ENCODE measurements at regions of chr2 and their contacts with region 1.

Region 1: DNA sequence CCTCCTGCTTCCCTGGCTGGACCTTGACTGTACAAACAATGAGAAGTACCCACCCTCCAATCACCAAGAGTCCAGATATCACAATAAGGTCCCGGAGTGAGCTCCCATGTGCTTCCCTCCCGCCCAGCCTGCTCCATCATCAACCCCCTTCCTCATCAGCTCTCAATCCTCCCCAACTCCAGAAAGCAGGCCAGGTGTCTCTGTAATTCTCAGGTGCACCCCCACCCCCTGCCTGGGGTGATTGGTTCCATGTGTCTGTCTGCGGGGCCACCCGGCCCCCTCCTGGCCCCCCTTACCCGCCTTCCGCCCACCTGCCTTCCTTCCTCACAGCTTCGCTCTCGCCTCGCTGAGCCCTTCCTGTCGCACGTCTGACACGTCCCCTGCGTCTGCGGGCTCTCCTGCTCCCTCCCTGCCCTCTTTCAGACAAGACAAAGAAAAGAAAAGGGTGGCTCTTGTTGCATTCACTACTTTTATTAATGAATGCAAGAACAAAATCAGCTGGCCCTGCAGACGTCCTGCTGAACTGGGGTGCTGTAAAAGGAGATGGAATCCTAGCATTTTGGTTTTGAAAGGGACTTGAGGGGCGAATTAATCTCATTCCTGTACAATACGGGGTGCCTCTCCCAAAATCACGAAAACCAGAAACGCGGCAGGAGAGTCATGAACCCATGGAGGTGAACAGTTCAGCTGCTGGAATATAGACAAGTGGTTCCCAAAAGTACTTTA is 26.5 kb upstream of the IGFBP2 start:
- DNase-seq: peak; percentile 44
- H3K4me3 Mint-ChIP-seq: peak overlapping the region; percentile 65
- H3K27ac Mint-ChIP-seq: peak overlapping the region; percentile 92
- H3K4me1 Mint-ChIP-seq: peaks cover 40% of the 10 kb centered on the region
- H3K27me3 Mint-ChIP-seq: peaks cover 4% of the 10 kb centered on the region

Region 2: GRCh38 chr2:216507220-216508160 is 99.2 kb before region 1 on chr2:
- intact Hi-C with region 1: no loop called
- DNase-seq: no peak
- H3K4me3 Mint-ChIP-seq: no peak overlapping the region
- H3K27ac Mint-ChIP-seq: no peak overlapping the region
- H3K4me1 Mint-ChIP-seq: peaks cover 30% of the 10 kb centered on the region
- H3K27me3 Mint-ChIP-seq: no peaks in the 10 kb centered on the region

Region 3: DNA sequence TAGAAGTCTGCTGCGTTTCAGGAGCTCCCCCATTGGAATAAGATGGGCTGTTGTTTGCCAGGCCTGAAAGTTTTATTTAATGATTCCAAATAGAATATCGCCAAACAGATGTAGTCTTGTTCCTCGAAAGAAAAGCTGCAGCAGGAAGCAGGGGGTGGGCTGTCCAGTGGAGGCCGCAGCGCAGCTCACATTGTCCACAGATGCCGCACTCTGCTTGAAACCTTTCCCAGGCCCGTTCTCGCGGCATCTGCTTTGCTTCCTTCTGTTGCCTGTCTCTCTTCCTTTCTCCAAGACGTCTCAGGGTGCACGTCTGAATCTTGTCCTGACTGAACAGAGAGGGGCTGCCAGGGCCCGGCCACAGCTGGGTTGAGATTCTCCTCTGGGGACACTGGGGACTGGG is 14.1 kb after region 1 on chr2:
- intact Hi-C with region 1: no loop called
- DNase-seq: no peak
- H3K4me3 Mint-ChIP-seq: no peak overlapping the region
- H3K27ac Mint-ChIP-seq: no peak overlapping the region
- H3K4me1 Mint-ChIP-seq: peaks cover 12% of the 10 kb centered on the region
- H3K27me3 Mint-ChIP-seq: no peaks in the 10 kb centered on the region

Region 4: DNA sequence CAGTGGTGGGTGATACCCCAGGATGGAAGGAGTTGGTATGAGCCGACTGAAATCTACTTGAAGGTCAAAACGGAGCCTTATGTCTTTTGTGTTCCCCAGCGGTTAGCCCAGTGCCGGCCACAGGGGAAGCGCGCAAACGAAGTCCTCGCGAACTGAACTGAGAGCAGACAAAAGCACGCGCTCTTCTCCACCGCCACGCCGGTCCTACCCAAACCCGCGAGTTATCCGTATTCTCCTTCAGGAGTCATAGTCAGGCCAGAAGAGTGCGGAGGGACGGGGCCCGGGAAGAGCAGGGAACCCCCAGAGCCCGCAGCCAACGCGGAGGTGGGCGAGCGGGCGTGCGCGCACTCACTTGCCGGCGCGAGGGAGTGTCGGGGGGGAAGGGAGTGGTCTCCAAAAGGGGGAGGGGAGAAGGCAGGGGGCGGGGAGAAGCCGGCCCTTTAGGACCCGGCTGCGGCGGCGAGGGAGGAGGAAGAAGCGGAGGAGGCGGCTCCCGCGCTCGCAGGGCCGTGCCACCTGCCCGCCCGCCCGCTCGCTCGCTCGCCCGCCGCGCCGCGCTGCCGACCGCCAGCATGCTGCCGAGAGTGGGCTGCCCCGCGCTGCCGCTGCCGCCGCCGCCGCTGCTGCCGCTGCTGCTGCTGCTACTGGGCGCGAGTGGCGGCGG is 26.4 kb after region 1 on chr2 and contains the start of gene IGFBP2:
- intact Hi-C with region 1: loop called (anchors 1 kb)
- DNase-seq: peak; percentile 16
- H3K4me3 Mint-ChIP-seq: peak within 1 kb of the TSS; percentile 84
- H3K27ac Mint-ChIP-seq: peak within 1 kb of the TSS; percentile 68
- H3K4me1 Mint-ChIP-seq: peaks cover 23% of the 10 kb centered on the region
- H3K27me3 Mint-ChIP-seq: peaks cover 68% of the 10 kb centered on the region
- total RNA-seq, gene IGFBP2: 11.1 and 12.3 TPM in 2 replicates

Measured in activated T-helper 1 cell treated with anti-CD3 and anti-CD28 coated beads, Interleukin-12 subunit alpha, Interleukin-12 subunit beta, Interleukin-2, Interleukin-4 antibody, amounts not matched to agents 30 ng/mL and 10 ng/mL and 1 ng/mL, durations not matched to agents 14 hours and 24 hours and 36 hours (primary cell).